T-cell (primary cell): ENCODE measurements at regions of chr4 and their contacts with region 1.

Region 1: DNA sequence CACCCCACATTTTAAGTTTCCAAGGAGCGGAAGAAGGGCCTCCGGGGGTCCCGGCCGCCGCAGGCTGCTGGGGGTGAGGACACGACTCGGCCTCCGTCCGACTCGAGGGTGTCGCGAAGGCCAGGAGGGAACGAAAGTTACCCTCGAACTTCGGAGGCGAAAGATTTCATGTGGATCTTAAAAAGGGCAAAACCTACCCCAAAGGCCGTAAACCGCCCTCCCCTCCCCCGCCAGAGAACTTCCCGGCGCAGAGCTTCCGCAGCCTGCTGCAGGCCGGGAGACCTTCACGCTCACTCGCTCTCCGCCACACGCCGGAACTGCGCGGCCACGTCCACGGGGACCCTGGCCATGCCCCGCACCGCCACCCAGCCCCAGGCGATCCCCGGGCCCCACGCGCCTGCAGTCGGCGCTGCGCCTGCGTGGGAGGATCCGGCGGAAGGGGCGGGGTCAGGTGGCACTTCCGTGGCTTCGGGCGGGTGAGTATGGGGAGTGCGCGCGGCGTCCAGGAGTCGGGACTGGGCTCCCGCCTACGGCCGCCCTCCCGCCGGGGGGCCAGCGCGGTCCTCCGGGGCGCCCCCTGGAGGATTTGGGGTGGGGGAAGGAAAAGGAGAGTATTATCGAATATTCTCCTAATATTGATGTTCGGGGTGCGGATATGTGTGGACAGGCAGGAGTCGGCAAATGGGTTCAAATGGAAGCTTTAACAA is at the start of gene MMAA:
- DNase-seq: peak; percentile 78 to 96 (median 90)
- ATAC-seq: peak; percentile 93 to 97 (median 96)
- H3K4me3 ChIP-seq: peak within 1 kb of the TSS; percentile 91 to 95
- H3K4me3 Mint-ChIP-seq: peak within 1 kb of the TSS; percentile 95 to 97 (median 96)
- H3K27ac ChIP-seq: peak within 1 kb of the TSS; percentile 97
- H3K27ac Mint-ChIP-seq: peak within 1 kb of the TSS; percentile 99
- H3K4me1 ChIP-seq: peaks cover 14 to 15% of the 10 kb centered on the region in 2 experiments
- H3K4me1 Mint-ChIP-seq: peaks cover 45 to 53% (median 45%) of the 10 kb centered on the region in 3 donors
- H3K27me3 ChIP-seq: no peaks in the 10 kb centered on the region
- H3K27me3 Mint-ChIP-seq: peaks cover under 1 to 1% of the 10 kb centered on the region in 2 donors
- total RNA-seq, gene MMAA: 7.2 to 13.1 (median 10.4) TPM

Region 2: GRCh38 chr4:145234091-145234706 is 384.9 kb before region 1 on chr4:
- CTCF ChIA-PET with region 1: interaction called, 7 to 28 read pairs
- POLR2A ChIA-PET with region 1: interaction called in 1 of 2 experiments, 3 read pairs
- DNase-seq: peak in 32 of 35 experiments; percentile 10 to 74 (median 38)
- ATAC-seq: peak; percentile 70 to 90 (median 80)
- H3K4me3 ChIP-seq: no peak overlapping the region
- H3K4me3 Mint-ChIP-seq: no peak overlapping the region
- H3K27ac ChIP-seq: no peak overlapping the region
- H3K27ac Mint-ChIP-seq: no peak overlapping the region
- H3K4me1 ChIP-seq: no peaks in the 10 kb centered on the region
- H3K4me1 Mint-ChIP-seq: no peaks in the 10 kb centered on the region
- H3K27me3 ChIP-seq: peaks cover 0 to 2% of the 10 kb centered on the region in 2 experiments
- H3K27me3 Mint-ChIP-seq: peaks cover 0 to 2% of the 10 kb centered on the region in 2 donors